Mucosa of descending colon (tissue), 3 donors: ENCODE measurements at regions of chr12 and their contacts with region 1.

Region 1: GRCh38 chr12:31406345-31406744 is 80.4 kb upstream of the SINHCAF start:
- DNase-seq: no peak
- ATAC-seq: no peak
- H3K4me3 ChIP-seq: no peak overlapping the region
- H3K4me1 ChIP-seq: peaks cover 6% of the 10 kb centered on the region
- CTCF ChIP-seq: no peak

Region 2: GRCh38 chr12:30926243-30927221 is 479.8 kb before region 1 on chr12 and contains the start of gene TSPAN11:
- intact Hi-C with region 1: no loop called
- DNase-seq: peak in 1 of 3 donors; percentile 23
- ATAC-seq: peak; percentile 19
- H3K4me3 ChIP-seq: no peak within 1 kb of the TSS
- H3K4me1 ChIP-seq: no peaks in the 10 kb centered on the region
- CTCF ChIP-seq: no peak
- total RNA-seq, gene TSPAN11: 3.2 to 19.9 (median 4.2) TPM

Region 3: GRCh38 chr12:31005944-31006361 is 400.4 kb before region 1 on chr12:
- intact Hi-C with region 1: no loop called
- DNase-seq: no peak
- ATAC-seq: peak; percentile 58
- H3K4me3 ChIP-seq: no peak overlapping the region
- H3K4me1 ChIP-seq: no peaks in the 10 kb centered on the region
- CTCF ChIP-seq: no peak

Region 4: GRCh38 chr12:31631784-31632183 is 225.4 kb after region 1 on chr12:
- intact Hi-C with region 1: loop called (anchors 2 to 5 kb)
- DNase-seq: no peak
- ATAC-seq: no peak
- H3K4me3 ChIP-seq: no peak overlapping the region
- H3K4me1 ChIP-seq: no peaks in the 10 kb centered on the region
- CTCF ChIP-seq: no peak